GM12878 (cell line): ENCODE measurements at regions of chr22 and their contacts with region 1.

Region 1: DNA sequence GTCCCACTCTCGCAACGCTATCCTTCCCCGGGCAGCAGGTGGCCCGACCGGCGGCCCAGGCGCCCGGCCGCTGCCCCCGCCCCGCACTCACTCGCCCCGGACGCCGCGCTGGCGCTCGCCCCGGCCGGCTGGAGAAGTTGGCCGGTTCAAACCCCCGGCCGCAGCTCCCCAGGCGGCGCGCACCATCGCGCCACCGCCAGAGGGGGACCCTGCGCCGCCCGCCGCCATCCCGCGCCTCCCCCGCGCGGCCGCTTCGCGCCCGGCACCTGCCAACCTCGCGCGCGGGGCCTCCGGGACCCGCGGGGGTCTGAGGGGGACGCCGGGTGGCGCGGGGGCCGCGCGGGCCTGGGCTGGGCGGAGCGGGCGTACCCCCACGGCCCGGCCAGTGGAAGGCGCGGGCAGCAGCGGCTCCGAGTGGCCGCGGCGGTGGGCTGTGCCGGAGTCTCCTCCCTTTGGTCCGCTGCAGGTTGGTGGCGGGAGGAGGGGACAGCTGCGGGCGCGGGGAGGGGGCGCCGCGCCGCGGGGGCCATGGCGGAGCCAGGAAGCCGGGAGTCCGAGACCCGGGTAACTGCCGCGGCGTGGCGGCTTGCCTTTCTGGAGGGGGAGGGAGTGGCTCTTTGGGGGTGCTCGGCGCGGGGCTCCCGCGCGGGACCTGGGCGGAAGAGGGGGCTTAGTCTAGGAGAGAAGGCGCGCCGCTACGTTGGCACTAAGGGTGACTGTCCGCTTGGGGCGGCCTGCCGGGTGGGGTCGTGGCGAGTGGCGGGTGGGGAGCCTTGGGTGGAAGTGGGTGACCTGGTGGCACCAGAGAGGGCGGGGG is at the starts of genes MPST and TST:
- DNase-seq: no peak
- ATAC-seq: peak; percentile 88
- H3K4me3 ChIP-seq: peak within 1 kb of the TSS; percentile 89
- H3K27ac ChIP-seq: peak within 1 kb of the TSS; percentile 58
- H3K4me1 ChIP-seq: peaks cover 8% of the 10 kb centered on the region
- H3K27me3 ChIP-seq: no peaks in the 10 kb centered on the region
- CTCF ChIP-seq: no peak; a peak in 1 of 6 replicates
- EP300 ChIP-seq: no peak
- POLR2A ChIP-seq: peak; percentile 73
- RAD21 ChIP-seq: no peak
- polyA plus RNA-seq, gene MPST: 0.95 to 2.4 TPM
- polyA plus RNA-seq, gene TST: 2.4 to 7.0 TPM

Region 2: DNA sequence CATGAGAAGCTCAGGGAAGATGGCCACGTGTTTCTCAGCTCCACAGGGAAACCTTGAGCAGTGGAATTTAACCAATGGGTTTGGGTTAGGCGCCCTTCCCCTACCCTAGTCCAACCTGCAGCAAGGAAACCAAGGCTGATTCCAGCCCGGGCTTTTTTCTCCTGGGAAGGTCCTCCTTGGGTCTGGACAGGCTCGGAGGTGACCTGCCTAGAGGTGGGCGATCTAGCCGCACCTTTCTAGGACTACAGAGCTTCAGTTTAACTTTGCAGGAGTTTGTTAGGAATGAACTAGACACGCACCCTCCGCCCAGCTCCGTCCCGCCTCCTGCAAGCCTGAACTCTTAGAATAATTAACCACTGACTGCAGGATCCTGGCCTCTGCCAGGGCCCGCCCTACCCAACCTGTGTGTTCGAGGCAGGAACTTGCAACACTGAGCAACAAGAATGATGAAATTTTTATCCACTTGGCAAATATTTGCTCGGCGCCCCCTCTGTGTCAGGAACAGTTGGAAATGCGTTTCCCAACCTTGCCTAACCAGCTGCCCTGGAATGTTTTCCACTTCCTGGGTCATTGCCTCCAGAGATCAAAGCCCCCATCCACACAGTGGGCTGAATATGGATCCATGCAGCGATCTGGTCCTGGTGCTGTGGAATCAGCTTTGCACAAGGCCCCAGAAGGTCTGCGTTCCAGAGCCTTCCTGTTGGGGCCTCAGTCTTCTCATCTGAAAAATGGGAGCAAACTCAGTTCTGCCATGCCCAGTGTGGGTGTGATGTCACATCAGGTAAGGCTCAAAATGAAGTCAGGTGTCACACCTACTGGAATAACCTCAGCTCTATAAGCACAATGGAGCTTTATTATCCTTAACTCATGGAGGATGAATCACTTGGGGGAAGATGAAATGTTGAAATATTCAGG is 13.3 kb after region 1 on chr22:
- CTCF ChIA-PET with region 1: interaction called, 17 read pairs
- POLR2A ChIA-PET with region 1: no interaction called
- RAD21 ChIA-PET with region 1: no interaction called
- SMC1A ChIA-PET with region 1: no interaction called
- in situ Hi-C with region 1: no loop called
- intact Hi-C with region 1: no loop called
- DNase-seq: no peak
- ATAC-seq: no peak
- H3K4me3 ChIP-seq: no peak overlapping the region
- H3K27ac ChIP-seq: no peak overlapping the region
- H3K4me1 ChIP-seq: no peaks in the 10 kb centered on the region
- H3K27me3 ChIP-seq: no peaks in the 10 kb centered on the region; a peak in 1 of 4 replicates
- CTCF ChIP-seq: no peak
- EP300 ChIP-seq: no peak
- POLR2A ChIP-seq: no peak
- RAD21 ChIP-seq: no peak

Region 3: GRCh38 chr22:37043828-37044538 is 24.5 kb after region 1 on chr22:
- CTCF ChIA-PET with region 1: interaction called, 39 read pairs
- POLR2A ChIA-PET with region 1: no interaction called
- RAD21 ChIA-PET with region 1: interaction called, 6 read pairs
- SMC1A ChIA-PET with region 1: interaction called, 4 read pairs
- in situ Hi-C with region 1: no loop called
- intact Hi-C with region 1: no loop called
- DNase-seq: no peak
- ATAC-seq: peak; percentile 99
- H3K4me3 ChIP-seq: no peak overlapping the region
- H3K27ac ChIP-seq: no peak overlapping the region
- H3K4me1 ChIP-seq: peaks cover 10% of the 10 kb centered on the region
- H3K27me3 ChIP-seq: peaks cover 0 to 2% of the 10 kb centered on the region in 2 experiments; a peak in 1 of 4 replicates
- CTCF ChIP-seq: peak; percentile 81 to 92 (median 85)
- EP300 ChIP-seq: no peak
- POLR2A ChIP-seq: no peak
- RAD21 ChIP-seq: peak; percentile 58

Region 4: GRCh38 chr22:37203354-37204037 is 184.0 kb after region 1 on chr22:
- CTCF ChIA-PET with region 1: no interaction called
- POLR2A ChIA-PET with region 1: no interaction called
- RAD21 ChIA-PET with region 1: no interaction called
- SMC1A ChIA-PET with region 1: no interaction called
- in situ Hi-C with region 1: no loop called
- intact Hi-C with region 1: no loop called
- DNase-seq: no peak
- ATAC-seq: no peak
- H3K4me3 ChIP-seq: no peak overlapping the region
- H3K27ac ChIP-seq: no peak overlapping the region
- H3K4me1 ChIP-seq: peaks cover 21% of the 10 kb centered on the region
- H3K27me3 ChIP-seq: no peaks in the 10 kb centered on the region
- CTCF ChIP-seq: no peak
- EP300 ChIP-seq: no peak
- POLR2A ChIP-seq: peak; percentile 15
- RAD21 ChIP-seq: no peak

Region 5: DNA sequence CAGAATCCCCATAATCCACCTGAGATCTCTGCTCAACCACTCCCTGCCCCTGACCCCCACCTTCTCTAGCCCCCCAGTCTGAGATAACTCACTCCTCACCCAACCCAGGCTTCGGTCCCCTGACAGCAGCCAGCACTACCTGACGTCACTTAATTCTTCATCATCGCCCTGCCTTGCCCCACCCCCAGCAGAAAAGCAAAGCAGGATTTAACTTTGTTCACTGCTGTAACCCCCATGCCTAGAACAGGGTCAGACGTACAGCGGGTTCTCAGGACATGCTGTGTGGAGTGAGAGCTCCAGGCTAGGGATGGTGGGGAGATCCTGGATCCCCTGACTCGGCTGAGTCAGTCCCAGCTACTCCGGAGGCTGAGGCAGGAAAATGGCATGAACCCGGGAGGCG is 362.0 kb after region 1 on chr22:
- CTCF ChIA-PET with region 1: no interaction called
- POLR2A ChIA-PET with region 1: interaction called, 12 read pairs
- RAD21 ChIA-PET with region 1: no interaction called
- SMC1A ChIA-PET with region 1: no interaction called
- in situ Hi-C with region 1: no loop called
- intact Hi-C with region 1: no loop called
- DNase-seq: no peak
- ATAC-seq: no peak
- H3K4me3 ChIP-seq: no peak overlapping the region
- H3K27ac ChIP-seq: no peak overlapping the region
- H3K4me1 ChIP-seq: no peaks in the 10 kb centered on the region
- H3K27me3 ChIP-seq: peaks cover 10 to 16% of the 10 kb centered on the region in 2 experiments; a peak in 3 of 4 replicates
- CTCF ChIP-seq: no peak
- EP300 ChIP-seq: no peak
- POLR2A ChIP-seq: no peak
- RAD21 ChIP-seq: no peak